ENCODE measurements at regions of chr18 and their contacts with region 1.

Region 1: DNA sequence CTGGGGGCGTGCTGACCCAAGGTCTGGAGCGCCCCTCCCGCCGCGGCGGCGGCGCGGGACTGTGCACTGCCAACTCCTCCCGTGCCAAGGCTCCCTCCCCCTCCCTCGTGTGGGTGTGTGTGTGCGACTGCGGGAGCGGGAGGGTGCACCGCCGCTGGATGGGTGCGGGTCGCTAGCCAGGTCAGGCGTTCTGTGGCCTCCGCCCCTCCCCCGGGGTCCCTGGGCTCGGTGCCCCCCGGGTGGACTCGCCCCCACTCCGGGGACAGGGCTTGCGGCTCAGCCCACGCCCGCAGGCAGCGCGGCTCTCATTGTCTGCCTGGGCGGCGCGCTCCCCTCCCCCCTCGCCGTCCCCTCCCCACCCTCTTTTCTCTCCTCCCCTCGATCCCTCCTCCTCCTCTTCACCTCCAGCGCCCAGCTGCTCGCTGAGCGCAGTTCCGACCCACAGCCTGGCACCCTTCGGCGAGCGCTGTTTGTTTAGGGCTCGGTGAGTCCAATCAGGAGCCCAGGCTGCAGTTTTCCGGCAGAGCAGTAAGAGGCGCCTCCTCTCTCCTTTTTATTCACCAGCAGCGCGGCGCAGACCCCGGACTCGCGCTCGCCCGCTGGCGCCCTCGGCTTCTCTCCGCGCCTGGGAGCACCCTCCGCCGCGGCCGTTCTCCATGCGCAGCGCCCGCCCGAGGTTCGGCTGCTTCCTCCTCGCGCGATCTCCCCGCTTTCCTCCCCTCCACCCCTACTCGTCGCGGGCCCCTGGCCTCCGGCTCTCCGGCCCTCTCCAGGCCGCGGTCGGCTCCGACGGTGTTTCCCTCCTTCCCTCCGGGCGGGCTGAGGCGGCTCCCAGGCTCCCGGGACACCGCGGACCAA is at the start of gene GATA6:
- DNase-seq: peak in 1 of 2 donors; percentile 89
- H3K4me3 ChIP-seq: peak within 1 kb of the TSS; percentile 66 to 68
- H3K27ac ChIP-seq: peak within 1 kb of the TSS; percentile 80
- H3K4me1 ChIP-seq: peaks cover 40% of the 10 kb centered on the region
- H3K27me3 ChIP-seq: peaks cover 10% of the 10 kb centered on the region
- CTCF ChIP-seq: peak in 1 of 3 experiments; percentile 54
- POLR2A ChIP-seq: no peak
- total RNA-seq, gene GATA6: 9.8 TPM

Region 2: GRCh38 chr18:22108674-22109073 is 60.6 kb before region 1 on chr18:
- intact Hi-C with region 1: no loop called
- DNase-seq: no peak
- H3K4me3 ChIP-seq: no peak overlapping the region
- H3K27ac ChIP-seq: no peak overlapping the region
- H3K4me1 ChIP-seq: no peaks in the 10 kb centered on the region
- H3K27me3 ChIP-seq: no peaks in the 10 kb centered on the region
- CTCF ChIP-seq: no peak
- POLR2A ChIP-seq: no peak

Region 3: DNA sequence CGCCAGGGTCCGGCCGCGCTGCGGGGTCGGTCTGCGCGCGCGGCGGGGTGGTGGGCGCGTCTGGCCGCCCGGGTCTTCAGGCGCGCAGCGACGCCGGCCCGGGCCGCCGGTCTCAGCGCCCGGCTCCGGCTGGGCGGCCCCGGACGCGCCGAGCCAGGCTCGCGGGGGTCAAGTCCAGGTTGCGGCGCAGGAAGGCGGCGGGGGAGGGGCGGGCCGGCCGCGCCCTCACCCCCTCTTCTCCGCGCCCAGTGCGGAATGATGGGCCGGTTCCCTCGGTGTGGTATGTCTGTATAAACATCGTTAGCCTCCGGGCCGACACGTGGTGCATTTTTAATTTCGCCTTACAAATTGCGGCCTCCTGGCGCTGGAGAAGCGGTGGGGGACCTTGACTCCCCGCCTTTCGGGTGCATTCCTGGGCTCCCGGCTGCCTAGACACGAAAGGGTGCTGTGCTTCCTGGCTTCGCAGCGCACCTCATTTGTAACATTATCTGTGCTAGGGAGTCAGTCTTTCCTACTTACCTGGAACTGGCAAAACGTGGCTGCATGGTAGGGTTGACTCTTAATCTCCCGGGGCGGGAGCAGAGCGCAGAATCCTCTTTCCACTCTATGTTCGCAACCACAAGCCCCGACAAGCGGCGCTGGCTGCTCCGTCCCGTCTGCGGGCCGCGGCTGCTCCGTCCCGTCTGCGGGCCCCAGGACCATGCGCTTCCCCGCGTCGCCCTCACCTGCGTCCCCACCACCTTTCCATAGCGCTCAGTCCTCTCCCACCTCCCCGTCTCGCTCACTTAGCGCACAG is 179.5 kb after region 1 on chr18:
- intact Hi-C with region 1: loop called (anchors 2 kb)
- DNase-seq: peak in 1 of 2 donors; percentile 84
- H3K4me3 ChIP-seq: peak overlapping the region; percentile 48 to 59
- H3K27ac ChIP-seq: peak overlapping the region; percentile 76
- H3K4me1 ChIP-seq: peaks cover 18% of the 10 kb centered on the region
- H3K27me3 ChIP-seq: no peaks in the 10 kb centered on the region
- CTCF ChIP-seq: no peak
- POLR2A ChIP-seq: no peak

Region 4: DNA sequence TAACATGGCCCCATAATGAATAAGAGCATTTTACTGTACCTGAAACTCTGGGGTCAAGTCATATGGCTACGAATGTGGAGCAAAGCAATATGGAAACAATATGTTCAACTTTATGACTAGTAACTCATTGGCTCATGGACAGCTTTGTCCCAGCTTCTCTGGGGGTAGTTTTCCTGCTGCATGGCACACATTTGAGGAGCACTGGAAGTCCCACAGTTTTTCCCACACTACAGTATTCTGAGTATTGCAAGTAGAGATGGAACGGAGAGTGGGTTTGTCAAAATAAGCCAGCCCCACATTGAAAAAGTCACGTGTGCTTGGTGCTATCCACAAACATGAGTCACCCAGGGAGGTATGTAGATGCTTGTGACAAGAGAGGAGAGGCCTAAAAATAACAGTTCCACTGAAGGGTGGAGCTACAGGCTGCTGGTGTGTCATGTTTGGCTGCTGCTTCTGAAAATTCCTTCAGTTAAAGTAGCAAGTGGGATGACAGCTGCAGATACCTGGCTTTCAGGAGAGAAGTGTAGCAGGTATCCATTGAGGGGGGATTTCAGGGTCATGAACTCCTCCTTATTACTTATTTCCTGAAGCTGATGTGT is 296.7 kb after region 1 on chr18:
- intact Hi-C with region 1: loop called (anchors 10 kb)
- DNase-seq: no peak
- H3K4me3 ChIP-seq: no peak overlapping the region
- H3K27ac ChIP-seq: peak overlapping the region; percentile 50
- H3K4me1 ChIP-seq: peaks cover 21% of the 10 kb centered on the region
- H3K27me3 ChIP-seq: no peaks in the 10 kb centered on the region
- CTCF ChIP-seq: no peak
- POLR2A ChIP-seq: no peak

Region 5: GRCh38 chr18:22563098-22563707 is 394.0 kb after region 1 on chr18:
- intact Hi-C with region 1: loop called (anchors 5 kb)
- DNase-seq: no peak
- H3K4me3 ChIP-seq: no peak overlapping the region
- H3K27ac ChIP-seq: no peak overlapping the region
- H3K4me1 ChIP-seq: peaks cover 18% of the 10 kb centered on the region
- H3K27me3 ChIP-seq: no peaks in the 10 kb centered on the region
- CTCF ChIP-seq: peak; percentile 68 to 77 (median 73)
- POLR2A ChIP-seq: no peak